Dorsolateral prefrontal cortex (tissue), 120 donors: ENCODE measurements at regions of chr5 and their contacts with region 1.

Region 1: DNA sequence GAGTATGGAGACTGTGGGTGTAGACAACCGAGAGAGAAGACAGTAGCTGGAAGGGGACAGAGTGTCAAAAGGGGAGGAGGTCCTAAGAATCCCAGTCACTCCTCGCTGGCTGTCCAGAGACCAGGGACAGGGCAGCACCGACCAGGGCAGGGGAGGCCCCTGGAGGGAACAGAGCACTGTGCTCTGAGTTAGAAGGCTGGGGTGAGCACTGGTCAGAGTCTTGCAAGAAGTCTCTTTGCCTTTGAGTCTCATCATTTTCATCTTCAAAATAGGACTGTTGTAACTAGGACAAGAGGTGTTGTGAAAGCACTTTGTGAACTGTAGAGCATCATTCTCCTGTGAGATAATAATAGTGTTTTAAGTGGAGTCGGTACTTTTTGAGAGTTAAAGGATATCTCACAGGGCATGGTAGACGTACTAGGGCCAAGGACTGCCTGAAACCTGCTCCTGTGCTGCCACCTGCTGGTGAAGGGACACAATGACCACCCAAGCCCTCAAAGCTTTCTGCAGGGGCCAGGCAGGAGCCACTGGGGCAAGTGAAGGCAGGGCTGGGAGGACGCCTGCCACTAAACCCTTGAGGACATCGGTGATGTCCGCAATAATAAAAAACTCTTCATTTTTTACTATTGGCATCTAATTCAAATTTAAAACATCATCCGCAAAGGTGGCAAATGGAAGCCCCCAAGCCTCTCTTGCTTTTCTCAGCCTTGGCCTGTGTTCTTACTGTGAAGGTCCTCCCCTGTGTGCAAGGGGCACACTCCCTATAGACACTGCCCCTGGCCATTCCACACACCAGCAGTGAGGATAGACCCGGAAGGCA is 28.2 kb downstream of the SLC6A7 start:
- DNase-seq: peak; percentile 71 to 89 (median 84)
- H3K4me3 ChIP-seq: no peak overlapping the region
- H3K27ac ChIP-seq: peak overlapping the region in 9 of 59 donors; percentile 3 to 51 (median 20)
- H3K27me3 ChIP-seq: no peaks in the 10 kb centered on the region
- CTCF ChIP-seq: peak; percentile 79 to 99 (median 96)

Region 2: DNA sequence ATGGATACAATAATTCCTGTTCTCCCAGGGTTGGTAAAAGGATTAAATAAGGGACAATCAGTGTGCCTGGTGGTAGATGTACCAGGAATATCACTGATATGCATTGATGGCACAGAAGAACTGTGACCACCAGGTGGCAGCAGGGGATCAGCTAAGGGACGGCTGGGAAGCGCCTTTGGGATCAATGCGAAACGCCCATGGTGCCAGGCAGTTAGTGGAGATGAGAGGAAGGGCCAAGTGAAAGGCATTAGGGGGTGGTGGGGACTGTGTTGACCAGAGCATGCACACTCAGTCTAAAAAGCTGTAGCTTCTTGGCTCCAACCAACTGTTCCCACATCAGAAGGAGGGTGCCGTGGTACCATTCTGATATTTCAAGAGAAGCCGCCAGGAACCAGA is 581.2 kb before region 1 on chr5:
- intact Hi-C with region 1: loop called in 1 of 2 experiments (anchors 10 kb)
- DNase-seq: peak in 8 of 10 donors; percentile 35 to 95 (median 84)
- H3K4me3 ChIP-seq: no peak overlapping the region
- H3K27ac ChIP-seq: peak overlapping the region in 1 of 59 donors; percentile 12
- H3K27me3 ChIP-seq: no peaks in the 10 kb centered on the region
- CTCF ChIP-seq: peak; percentile 62 to 96 (median 84)

Region 3: DNA sequence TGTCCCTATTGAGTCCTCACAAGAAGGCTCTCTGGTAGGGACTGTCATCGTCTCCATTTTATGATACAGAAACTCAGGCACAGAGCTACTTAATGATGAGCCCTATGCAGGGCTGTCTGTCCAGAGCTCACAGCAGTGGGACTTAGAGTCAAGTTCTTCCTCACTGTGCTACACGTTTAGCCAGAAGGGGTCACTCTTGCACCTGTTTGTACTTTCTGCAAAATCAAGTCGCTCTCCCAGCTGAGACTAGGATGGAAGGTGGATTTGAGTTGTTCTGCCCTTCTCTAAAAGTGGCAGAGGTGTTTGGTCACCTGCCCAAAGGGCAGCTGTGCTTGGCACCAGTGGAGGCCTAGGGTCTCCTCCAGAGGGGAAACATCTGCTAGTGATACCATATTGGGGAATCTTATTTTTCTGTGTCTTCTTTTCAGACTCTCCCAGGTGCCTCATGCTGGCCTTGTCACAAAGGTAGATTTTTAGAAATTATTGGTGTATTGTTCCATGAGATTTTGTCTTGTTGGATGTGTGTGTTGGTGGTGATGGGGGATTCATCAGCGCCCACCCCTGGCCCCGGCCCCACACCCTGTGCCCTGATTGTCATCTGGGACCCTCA is 383.7 kb before region 1 on chr5:
- intact Hi-C with region 1: loop called in 1 of 2 experiments (anchors 5 kb)
- DNase-seq: peak in 4 of 10 donors; percentile 15 to 69 (median 50)
- H3K4me3 ChIP-seq: no peak overlapping the region
- H3K27ac ChIP-seq: peak overlapping the region in 1 of 59 donors; percentile 37
- H3K27me3 ChIP-seq: no peaks in the 10 kb centered on the region
- CTCF ChIP-seq: peak; percentile 27 to 81 (median 67)

Region 4: DNA sequence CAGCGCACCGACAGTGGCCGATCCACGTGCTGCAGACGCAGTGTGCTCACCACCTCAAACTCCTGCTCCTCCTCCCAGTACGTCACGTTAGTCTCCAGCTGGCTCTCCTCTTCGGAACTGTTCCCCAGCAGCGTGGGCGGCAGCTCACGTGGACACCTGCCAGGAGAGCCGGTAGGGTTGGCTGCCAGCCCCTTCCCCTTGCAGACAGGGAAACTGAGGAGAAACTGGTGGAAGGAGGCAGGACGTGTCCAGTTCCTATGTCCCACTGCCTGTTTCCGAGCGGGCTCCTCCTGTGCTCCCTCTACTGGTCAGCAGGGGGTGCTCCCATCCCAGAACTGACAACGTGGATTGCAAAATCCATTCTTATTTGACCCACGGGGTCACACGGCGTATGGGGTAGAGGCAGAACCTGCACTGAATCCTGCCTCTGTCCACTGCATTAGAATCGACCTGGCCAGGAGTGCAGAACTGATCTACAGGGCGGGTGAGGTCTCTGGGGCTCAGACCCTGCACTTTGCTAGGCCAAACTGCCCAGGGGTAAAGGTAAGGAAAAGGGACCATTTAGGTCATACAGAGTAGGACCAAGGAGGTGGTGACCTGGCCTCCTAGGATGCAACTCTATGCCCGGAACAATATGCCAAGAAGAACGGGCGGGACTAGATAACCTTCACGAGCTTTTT is 88.1 kb before region 1 on chr5:
- intact Hi-C with region 1: loop called (anchors 2 kb)
- DNase-seq: peak in 8 of 10 donors; percentile 39 to 79 (median 68)
- H3K4me3 ChIP-seq: peak overlapping the region in 30 of 59 donors; percentile 5 to 58 (median 29)
- H3K27ac ChIP-seq: peak overlapping the region in 26 of 59 donors; percentile 10 to 70 (median 47)
- H3K27me3 ChIP-seq: no peaks in the 10 kb centered on the region
- CTCF ChIP-seq: peak; percentile 75 to 97 (median 92)

Region 5: DNA sequence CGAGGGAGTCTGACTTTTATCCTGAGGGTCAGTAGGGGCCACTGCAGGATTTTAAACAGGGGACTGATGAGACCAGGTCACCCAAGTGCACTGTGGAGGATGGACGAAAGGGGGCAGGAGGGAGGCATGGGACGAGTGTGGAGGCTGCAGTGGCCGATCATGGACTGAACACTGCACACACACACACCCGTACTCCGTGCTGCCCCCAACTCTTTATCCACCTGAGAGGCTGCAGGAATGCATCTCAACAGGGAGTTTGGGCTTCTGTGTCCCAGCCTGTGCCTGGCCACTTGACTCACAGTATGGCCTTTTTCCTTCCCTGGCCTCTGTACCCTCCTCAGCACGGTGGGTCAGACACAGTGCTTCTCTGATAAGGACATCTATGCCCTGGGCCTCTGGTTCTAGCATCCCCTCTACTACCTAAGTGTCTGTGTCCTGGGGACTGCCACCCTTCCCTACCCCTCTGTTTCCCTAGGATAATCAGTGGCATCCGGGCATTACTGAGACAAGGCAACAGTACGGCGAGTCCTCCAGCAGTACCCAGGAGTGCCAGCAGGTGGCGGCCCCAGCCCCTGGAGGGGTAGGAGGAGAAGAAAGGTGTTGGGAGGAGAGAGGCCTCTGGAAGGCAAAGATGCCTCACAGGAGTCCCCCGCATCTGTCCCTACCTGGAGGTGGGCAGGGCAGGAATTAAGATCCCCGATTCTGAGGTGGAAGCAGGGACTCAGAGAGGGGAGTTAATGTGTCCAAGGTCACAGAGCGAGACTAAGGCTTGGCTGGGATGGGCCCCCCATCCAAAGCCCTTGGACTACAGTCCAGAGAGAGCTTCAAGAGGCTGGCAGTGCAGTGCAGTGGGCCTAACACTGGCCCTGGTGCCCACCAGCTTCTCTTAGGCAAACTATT is 56.6 kb before region 1 on chr5:
- intact Hi-C with region 1: loop called (anchors 1 to 5 kb)
- DNase-seq: peak; percentile 68 to 92 (median 84)
- H3K4me3 ChIP-seq: no peak overlapping the region
- H3K27ac ChIP-seq: peak overlapping the region in 42 of 59 donors; percentile 6 to 95 (median 64)
- H3K27me3 ChIP-seq: peaks cover 0 to 5% (median 0%) of the 10 kb centered on the region in 45 donors
- CTCF ChIP-seq: peak; percentile 51 to 91 (median 84)